ENCODE measurements at regions of chr4 and their contacts with region 1.

Region 1: DNA sequence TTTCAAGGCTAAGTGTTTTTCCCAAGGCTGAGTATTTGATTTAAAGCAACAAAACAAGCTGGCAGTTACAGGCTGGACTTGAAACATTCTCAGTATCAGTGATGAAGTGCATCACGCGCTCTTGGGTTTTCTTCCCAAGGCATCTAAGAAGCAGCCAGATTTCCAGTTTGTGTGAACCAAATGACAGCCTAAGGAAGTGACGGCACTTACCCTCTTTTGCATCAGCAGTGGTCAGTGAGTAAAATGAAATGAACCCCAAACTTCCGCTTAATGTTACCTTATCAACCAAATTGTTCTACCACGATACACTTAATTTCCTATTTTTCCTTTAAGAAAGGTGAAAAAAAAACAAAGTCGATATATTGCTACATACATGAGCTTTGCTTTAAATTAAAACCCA is 15.8 kb upstream of the GYPE start:
- DNase-seq: no peak
- CTCF ChIP-seq: no peak

Region 2: DNA sequence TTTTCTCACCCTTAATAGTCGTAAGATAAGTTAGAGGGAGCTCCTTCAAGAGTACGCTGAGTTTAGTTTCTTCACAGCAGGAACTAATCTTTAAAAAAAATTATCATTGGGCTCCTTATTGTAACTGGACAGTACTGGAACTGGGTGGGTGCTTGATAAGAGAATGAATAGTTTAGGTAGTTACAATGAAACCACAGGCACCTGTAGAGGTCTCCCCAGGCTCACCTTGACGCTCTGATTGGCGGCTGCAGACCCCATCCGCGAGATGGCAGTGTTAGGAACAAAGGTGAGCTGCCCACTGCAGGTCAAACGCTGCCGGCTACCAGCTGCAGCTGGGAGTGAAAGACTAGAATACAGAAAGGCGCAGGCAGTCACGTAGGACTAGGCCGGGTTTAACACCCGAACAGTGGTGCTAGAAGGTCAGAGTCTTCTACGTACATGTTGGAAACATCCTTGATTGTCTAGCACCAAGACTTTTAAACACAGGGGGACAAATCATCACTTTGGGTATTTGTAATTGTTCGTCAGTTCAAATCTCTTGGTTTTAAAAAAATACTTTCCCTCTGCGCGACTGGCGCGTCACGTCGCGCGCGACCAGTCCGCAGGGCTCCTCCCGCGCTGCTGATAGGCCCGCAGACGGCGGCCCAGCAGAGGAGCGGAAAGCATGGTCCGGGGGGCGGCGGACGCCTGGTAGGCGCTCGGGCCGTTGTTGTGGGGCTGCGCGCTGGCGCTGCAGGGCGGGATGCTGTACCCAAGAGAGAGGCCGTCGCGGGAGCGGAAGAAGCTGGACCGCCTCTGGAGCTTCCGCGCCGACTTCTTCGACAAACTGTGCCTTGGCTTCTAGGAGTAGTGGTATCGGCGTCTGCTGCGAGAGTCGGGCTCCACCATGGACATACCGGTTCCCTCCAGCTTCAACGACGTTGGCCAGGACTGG is 362.1 kb before region 1 on chr4:
- in situ Hi-C with region 1: loop called (anchors 25 kb)
- DNase-seq: peak; percentile 72
- CTCF ChIP-seq: peak; percentile 77